Gastrocnemius medialis (tissue), 4 donors: ENCODE measurements at regions of chr6 and their contacts with region 1.

Region 1: DNA sequence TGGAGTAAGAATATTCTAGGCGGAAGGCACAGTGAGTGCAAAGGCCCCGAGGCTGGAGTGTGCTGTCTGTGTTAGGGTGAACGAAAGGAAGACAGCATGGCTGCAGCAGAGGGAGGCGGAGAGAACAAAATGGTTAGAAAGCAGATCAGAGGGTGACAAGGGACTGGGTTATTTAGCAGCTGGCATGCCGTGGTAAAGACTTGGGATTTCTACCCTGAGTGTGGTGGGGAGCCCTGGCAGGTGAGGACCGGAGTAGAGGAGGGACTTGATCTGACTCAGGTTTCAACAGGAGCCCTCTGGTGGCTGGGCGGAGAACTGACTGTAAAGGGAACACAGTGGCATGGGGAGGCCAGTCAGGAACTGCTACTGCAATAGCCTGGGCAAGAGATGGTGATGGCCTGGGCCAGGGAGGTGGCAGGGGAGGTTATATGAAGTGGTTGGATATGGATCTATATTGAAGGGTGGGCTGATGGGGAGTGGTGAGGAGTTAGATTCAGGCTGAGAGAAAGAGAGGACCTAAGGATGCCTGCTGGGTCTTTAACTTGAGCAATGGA is 38.0 kb downstream of the PIM1 start:
- DNase-seq: peak; percentile 44 to 72
- ATAC-seq: peak in 1 of 2 donors; percentile 63
- H3K4me3 ChIP-seq: no peak overlapping the region
- H3K27ac ChIP-seq: no peak overlapping the region
- H3K4me1 ChIP-seq: peaks cover 0 to 7% of the 10 kb centered on the region in 2 donors
- H3K27me3 ChIP-seq: no peaks in the 10 kb centered on the region
- CTCF ChIP-seq: peak; percentile 50 to 79 (median 69)
- POLR2A ChIP-seq: no peak

Region 2: GRCh38 chr6:36765594-36766398 is 442.2 kb before region 1 on chr6:
- in situ Hi-C with region 1: no loop called
- intact Hi-C with region 1: loop called (anchors 5 kb)
- DNase-seq: peak; percentile 38 to 71
- ATAC-seq: peak; percentile 63 to 65
- H3K4me3 ChIP-seq: no peak overlapping the region
- H3K27ac ChIP-seq: no peak overlapping the region
- H3K4me1 ChIP-seq: peaks cover 11 to 22% of the 10 kb centered on the region in 2 donors
- H3K27me3 ChIP-seq: no peaks in the 10 kb centered on the region
- CTCF ChIP-seq: peak; percentile 79 to 91 (median 88)
- POLR2A ChIP-seq: no peak

Region 3: DNA sequence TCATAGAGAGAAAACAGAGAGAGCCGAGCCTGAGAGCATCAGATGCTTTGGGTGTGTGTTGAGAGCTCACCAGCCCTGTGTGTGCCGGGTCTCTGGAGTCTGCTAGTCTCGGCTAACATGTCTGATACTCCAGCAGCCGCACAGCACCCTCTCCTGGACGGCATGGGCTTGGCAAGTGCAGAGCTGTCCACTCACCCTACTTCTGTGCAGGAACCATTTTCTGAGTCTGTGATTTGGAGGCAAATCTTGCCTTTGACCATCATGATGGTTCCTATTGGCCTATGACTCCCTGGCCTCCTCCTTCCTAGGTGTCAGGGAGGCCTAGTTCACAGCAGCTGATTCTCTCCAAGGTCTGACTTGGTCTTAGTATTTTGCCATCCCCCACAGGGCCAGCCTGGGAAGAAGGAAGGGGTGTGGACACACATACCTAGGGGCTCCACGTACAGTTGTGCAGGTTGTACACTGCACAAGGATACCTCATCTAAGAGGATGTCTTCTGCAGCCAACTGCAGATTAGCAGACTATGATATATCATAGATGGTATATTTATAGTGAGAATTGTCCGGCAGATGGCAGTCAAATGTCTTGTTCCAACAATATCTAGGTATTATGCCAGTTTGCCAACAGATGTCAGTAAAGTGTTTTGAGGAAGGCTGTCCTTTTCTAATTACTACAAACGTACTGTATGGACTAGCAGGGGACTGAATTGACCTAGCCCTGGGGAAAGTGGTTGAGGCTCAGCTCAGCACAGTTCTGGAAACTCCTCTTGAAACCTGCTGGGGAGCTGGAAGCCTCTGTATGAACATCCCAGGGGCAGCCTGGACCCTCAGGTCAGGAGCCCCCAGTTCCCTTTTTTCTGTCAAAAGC is 189.5 kb before region 1 on chr6:
- in situ Hi-C with region 1: loop called in 1 of 4 experiments (anchors 10 kb)
- intact Hi-C with region 1: loop called (anchors 1 kb)
- DNase-seq: peak; percentile 79 to 90
- ATAC-seq: peak; percentile 96 to 98
- H3K4me3 ChIP-seq: no peak overlapping the region
- H3K27ac ChIP-seq: peak overlapping the region; percentile 40 to 67 (median 56)
- H3K4me1 ChIP-seq: peaks cover 9 to 11% of the 10 kb centered on the region in 2 donors
- H3K27me3 ChIP-seq: no peaks in the 10 kb centered on the region
- CTCF ChIP-seq: peak; percentile 84 to 95 (median 91)
- POLR2A ChIP-seq: no peak

Region 4: DNA sequence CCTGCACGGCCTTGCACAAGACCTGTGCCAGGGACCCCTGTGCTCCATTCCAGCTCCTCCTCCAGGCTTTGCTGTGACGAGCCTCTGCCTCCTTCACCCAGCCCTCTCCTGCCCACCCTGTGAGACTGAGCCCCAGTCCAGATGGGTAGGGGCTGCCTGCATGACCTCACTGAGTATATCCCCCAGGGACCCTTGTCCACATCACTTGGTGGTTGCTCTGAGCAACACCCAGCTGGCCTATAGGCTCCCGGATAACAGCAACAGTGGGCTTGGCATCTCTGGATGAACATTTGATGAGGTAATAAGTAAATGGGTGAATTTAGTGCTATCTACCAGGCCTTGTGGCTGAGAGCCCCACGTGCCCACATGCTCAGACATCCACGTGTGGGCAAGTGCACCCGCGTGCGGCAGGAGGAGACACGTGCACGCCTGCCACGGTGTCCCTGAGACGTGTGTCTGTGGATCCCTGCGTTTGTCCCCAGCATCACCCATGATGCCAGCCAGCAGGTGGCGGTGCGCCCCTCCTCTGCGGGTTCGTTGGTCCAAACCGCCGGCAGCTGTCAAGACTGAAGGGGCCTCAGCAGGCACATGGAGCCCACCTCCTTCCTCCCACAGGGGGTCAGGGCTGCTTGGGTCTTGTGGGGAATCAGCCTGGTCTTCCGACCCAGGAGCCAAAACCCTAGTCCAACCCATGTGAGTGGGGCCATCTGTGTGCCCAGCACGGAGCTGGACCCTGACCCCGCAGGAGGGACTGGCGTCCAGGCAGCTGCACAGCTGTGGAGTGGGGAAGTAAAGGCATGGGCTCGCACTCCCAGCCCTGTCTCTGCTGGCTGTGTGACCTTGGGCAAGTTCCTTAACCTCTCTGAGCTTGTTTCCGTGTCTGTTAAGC is 156.6 kb before region 1 on chr6:
- in situ Hi-C with region 1: no loop called
- intact Hi-C with region 1: loop called (anchors 1 kb)
- DNase-seq: peak; percentile 85 to 87
- ATAC-seq: peak; percentile 87 to 91
- H3K4me3 ChIP-seq: no peak overlapping the region
- H3K27ac ChIP-seq: peak overlapping the region in 1 of 4 donors; percentile 13
- H3K4me1 ChIP-seq: peaks cover 6 to 10% of the 10 kb centered on the region in 2 donors
- H3K27me3 ChIP-seq: no peaks in the 10 kb centered on the region
- CTCF ChIP-seq: peak; percentile 95 to 98 (median 97)
- POLR2A ChIP-seq: no peak

Region 5: GRCh38 chr6:37272834-37273566 is 65.0 kb after region 1 on chr6:
- in situ Hi-C with region 1: no loop called
- intact Hi-C with region 1: no loop called
- DNase-seq: no peak
- ATAC-seq: no peak
- H3K4me3 ChIP-seq: no peak overlapping the region
- H3K27ac ChIP-seq: peak overlapping the region in 2 of 4 donors; percentile 29 to 79
- H3K4me1 ChIP-seq: peaks cover 53 to 59% of the 10 kb centered on the region in 2 donors
- H3K27me3 ChIP-seq: no peaks in the 10 kb centered on the region
- CTCF ChIP-seq: no peak
- POLR2A ChIP-seq: no peak

Region 6: DNA sequence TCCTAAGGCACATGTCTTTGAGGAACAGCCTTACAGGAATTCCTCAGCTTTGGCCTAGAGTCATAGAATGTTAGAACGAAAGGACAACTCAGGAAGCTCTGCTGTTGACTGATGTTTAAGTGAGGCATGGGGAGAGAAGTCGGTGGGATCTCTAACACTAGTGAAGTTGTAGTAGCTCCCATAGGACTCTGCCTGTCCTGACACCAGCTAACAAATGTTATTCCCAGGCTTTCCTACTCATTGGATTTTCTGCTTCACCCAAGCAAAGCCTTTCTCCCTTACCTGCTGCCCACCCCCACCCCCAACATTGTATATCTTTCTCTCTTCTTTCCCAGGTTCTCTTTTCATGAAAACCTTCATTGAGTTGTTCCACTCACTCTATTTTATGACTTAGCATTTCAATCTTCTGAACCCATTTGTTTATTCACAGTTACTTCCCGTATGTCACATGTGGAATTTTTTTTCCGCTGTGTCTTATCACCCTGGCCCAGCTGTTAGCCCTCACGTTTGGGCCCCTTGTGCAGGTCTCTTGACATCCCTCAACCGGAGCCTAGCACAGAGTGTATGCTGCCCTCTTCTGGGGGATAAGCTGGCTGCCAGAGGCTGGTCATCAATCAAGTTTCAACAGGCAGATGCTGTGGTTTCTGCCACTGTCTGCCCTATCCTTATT is 106.6 kb after region 1 on chr6:
- in situ Hi-C with region 1: no loop called
- intact Hi-C with region 1: loop called (anchors 5 kb)
- DNase-seq: peak in 1 of 2 donors; percentile 40
- ATAC-seq: peak; percentile 45 to 85
- H3K4me3 ChIP-seq: no peak overlapping the region
- H3K27ac ChIP-seq: no peak overlapping the region
- H3K4me1 ChIP-seq: no peaks in the 10 kb centered on the region
- H3K27me3 ChIP-seq: no peaks in the 10 kb centered on the region
- CTCF ChIP-seq: peak; percentile 19 to 49 (median 42)
- POLR2A ChIP-seq: no peak